Astrocyte of the cerebellum (primary cell): ENCODE measurements at regions of chr10 and their contacts with region 1.

Region 1: GRCh38 chr10:98467506-98468346 is 21.0 kb upstream of the HPS1 start:
- DNase-seq: peak; percentile 70
- H3K4me3 ChIP-seq: peak overlapping the region; percentile 48
- CTCF ChIP-seq: peak; percentile 80

Region 2: GRCh38 chr10:98242823-98243222 is 224.9 kb before region 1 on chr10:
- in situ Hi-C with region 1: loop called (anchors 25 kb)
- DNase-seq: peak; percentile 35
- H3K4me3 ChIP-seq: no peak overlapping the region
- CTCF ChIP-seq: peak; percentile 58

Region 3: DNA sequence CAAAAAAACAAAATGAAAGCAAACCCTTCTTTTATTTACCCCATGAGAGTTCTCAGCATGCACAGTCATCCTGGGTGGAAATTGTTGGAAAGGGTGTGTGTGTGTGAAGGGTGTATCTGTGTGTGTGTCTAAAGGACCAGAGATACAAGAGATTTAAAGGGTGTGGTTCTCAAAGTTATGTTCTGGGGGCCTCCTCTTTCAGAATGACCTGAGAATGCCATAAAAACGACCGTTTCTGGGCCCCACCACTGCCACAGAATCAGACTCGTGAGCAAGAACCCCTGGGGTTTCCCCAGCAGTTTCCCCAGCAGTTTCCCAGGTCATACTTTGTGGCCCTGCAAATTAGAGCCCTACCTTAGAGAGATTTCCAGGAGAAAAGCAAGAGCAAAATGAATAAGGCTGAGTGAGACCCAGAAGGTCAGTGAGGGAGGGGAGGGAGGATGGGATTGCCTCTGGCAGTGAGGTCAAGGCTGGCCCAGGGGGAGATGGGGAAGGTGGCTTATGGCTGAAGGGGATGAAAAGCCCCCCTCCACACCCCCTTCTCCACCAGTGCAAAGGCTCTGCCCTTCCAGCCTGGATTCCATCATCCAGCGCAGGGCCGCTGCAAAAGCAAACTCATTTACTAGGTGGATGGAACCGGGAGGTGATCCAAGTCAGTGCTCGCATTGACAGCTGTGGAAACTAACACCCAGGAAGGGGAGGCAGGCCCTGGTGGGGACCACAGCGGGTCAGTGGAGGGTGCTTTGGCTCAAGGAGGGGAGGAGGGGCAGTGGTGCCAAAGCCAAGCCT is 63.0 kb before region 1 on chr10:
- in situ Hi-C with region 1: no loop called
- DNase-seq: no peak
- H3K4me3 ChIP-seq: no peak overlapping the region
- CTCF ChIP-seq: no peak

Region 4: GRCh38 chr10:99234041-99234790 is 766.5 kb after region 1 on chr10:
- in situ Hi-C with region 1: loop called (anchors 25 kb)
- DNase-seq: peak; percentile 15
- H3K4me3 ChIP-seq: peak overlapping the region; percentile 32
- CTCF ChIP-seq: no peak